ENCODE measurements at regions of chr20 and their contacts with region 1.

Region 1: GRCh38 chr20:833450-834150 is at the start of gene FAM110A:
- DNase-seq: peak; percentile 91
- ATAC-seq: peak; percentile 92
- H3K4me3 Mint-ChIP-seq: peak within 1 kb of the TSS; percentile 88
- H3K27ac Mint-ChIP-seq: peak within 1 kb of the TSS; percentile 81
- H3K4me1 Mint-ChIP-seq: peaks cover 44% of the 10 kb centered on the region
- H3K27me3 Mint-ChIP-seq: no peaks in the 10 kb centered on the region
- CTCF ChIP-seq: no peak
- total RNA-seq, gene FAM110A: 9.2 and 11.0 TPM in 2 replicates

Region 2: DNA sequence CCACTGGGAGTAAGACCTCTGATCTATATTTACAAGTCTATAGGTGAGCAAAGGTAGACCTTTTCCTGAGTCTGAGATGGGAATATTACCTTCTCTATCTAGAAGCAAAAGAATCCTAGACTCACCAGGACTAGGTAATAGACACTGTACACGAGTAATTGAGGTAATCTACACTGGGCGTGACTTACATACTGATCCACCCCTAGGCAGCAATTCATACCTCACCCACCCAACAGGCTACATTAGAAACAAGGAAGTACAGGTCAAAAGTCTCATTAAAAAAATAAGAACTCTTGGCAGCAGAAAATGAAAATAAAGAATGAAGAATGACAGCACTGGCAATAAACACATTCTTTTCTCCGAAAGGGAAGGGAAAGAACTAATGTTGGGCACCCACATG is 297.6 kb before region 1 on chr20:
- CTCF ChIA-PET with region 1: no interaction called
- POLR2A ChIA-PET with region 1: no interaction called
- intact Hi-C with region 1: no loop called
- DNase-seq: no peak
- ATAC-seq: peak; percentile 65
- H3K4me3 Mint-ChIP-seq: peak overlapping the region; percentile 25
- H3K27ac Mint-ChIP-seq: no peak overlapping the region
- H3K4me1 Mint-ChIP-seq: peaks cover 90% of the 10 kb centered on the region
- H3K27me3 Mint-ChIP-seq: no peaks in the 10 kb centered on the region
- CTCF ChIP-seq: no peak

Region 3: GRCh38 chr20:653110-653589 is 180.4 kb before region 1 on chr20 and contains the start of gene SRXN1:
- CTCF ChIA-PET with region 1: no interaction called
- POLR2A ChIA-PET with region 1: interaction called, 7 read pairs
- intact Hi-C with region 1: loop called (anchors 1 kb)
- DNase-seq: peak; percentile 84
- ATAC-seq: peak; percentile 94
- H3K4me3 Mint-ChIP-seq: peak within 1 kb of the TSS; percentile 81
- H3K27ac Mint-ChIP-seq: peak within 1 kb of the TSS; percentile 67
- H3K4me1 Mint-ChIP-seq: peaks cover 23% of the 10 kb centered on the region
- H3K27me3 Mint-ChIP-seq: peaks cover 8% of the 10 kb centered on the region
- CTCF ChIP-seq: no peak
- total RNA-seq, gene SRXN1: 6.1 and 7.4 TPM in 2 replicates

Region 4: DNA sequence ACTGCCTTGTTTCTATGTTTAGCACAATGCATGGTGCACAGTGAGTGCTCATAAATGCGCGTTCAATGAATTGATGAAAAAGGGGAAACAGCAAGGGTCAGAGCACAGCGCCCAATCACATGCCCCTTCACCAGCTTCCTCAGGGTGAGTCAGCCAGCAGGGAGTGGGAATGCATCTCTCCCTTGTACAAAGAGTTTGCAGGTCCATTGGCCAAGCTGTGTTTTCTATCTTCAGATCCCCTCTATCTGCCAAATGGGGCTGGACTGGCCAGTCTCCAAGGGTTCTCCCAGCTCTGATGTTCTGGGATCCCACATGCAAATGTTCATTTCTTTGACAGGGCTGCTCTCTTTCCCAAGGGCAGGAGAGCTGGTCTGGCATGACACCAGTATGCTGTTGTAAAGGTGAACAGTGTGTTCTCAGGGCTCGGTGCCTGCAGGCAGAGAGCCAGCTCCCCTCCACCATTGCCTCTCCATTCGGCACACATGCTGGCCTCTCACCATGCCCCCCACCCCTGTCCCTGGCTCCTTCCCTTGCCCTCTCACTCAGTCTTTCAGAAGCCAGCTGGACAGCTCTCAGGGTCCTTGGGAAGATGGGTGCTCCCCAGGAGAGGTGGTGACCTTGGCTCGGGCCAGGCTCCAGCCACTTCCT is 57.6 kb after region 1 on chr20:
- CTCF ChIA-PET with region 1: no interaction called
- POLR2A ChIA-PET with region 1: interaction called, 4 read pairs
- intact Hi-C with region 1: loop called (anchors 5 kb)
- DNase-seq: no peak
- ATAC-seq: no peak
- H3K4me3 Mint-ChIP-seq: peak overlapping the region; percentile 29
- H3K27ac Mint-ChIP-seq: no peak overlapping the region
- H3K4me1 Mint-ChIP-seq: peaks cover 30% of the 10 kb centered on the region
- H3K27me3 Mint-ChIP-seq: peaks cover 5% of the 10 kb centered on the region
- CTCF ChIP-seq: no peak

Region 5: DNA sequence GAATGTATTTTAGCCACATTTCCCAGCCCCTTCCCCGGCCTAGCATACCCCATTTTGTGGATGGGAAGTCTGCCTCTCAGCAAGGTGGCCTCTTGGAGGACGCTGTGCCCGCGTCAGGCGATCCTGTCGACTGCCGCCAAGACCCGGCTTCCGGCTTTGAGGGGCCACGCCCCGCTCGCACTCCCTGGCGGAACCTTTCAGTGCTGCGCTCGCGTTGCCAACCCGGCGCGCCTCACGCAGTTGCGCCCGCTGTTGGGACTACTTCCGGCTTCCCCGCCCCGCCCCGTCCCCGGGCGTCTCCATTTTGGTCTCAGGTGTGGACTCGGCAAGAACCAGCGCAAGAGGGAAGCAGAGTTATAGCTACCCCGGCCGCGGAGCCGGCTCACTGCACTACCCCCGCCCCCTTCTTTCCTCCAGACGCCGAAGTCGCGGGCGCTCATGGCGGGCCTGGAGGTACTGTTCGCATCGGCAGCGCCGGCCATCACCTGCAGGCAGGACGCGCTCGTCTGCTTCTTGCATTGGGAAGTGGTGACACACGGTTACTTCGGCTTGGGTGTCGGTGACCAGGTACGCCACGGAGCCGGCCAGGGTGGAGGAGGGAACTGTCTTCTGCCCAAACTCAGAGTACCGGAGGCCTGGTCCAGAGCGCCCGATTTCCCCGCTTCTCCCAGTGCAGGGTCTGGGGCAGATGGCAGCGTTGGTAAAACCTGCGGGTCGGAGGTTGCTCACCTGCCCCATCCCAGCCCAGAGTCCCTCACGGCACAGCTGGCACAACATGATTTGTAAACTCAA is 284.9 kb after region 1 on chr20 and contains the start of gene PSMF1:
- CTCF ChIA-PET with region 1: no interaction called
- POLR2A ChIA-PET with region 1: no interaction called
- intact Hi-C with region 1: loop called (anchors 1 kb)
- DNase-seq: peak; percentile 98
- ATAC-seq: peak; percentile 94
- H3K4me3 Mint-ChIP-seq: peak within 1 kb of the TSS; percentile 93
- H3K27ac Mint-ChIP-seq: peak within 1 kb of the TSS; percentile 85
- H3K4me1 Mint-ChIP-seq: peaks cover 64% of the 10 kb centered on the region
- H3K27me3 Mint-ChIP-seq: no peaks in the 10 kb centered on the region
- CTCF ChIP-seq: no peak
- total RNA-seq, gene PSMF1: 130 and 137 TPM in 2 replicates

Measured in activated B cell treated with CpG ODN at 0.5 μM for 24 hours (primary cell).